CD8-positive, alpha-beta T cell (primary cell): ENCODE measurements at regions of chr12 and their contacts with region 1.

Region 1: GRCh38 chr12:120356567-120357030 is 12.4 kb downstream of the MSI1 start:
- DNase-seq: peak; percentile 39 to 83 (median 75)
- ATAC-seq: peak; percentile 96
- H3K4me3 ChIP-seq: no peak overlapping the region
- H3K4me3 Mint-ChIP-seq: no peak overlapping the region
- H3K27ac ChIP-seq: no peak overlapping the region
- H3K27ac Mint-ChIP-seq: no peak overlapping the region
- H3K4me1 ChIP-seq: no peaks in the 10 kb centered on the region
- H3K4me1 Mint-ChIP-seq: peaks cover 2% of the 10 kb centered on the region
- H3K27me3 ChIP-seq: peaks cover 0 to 2% of the 10 kb centered on the region in 2 experiments
- H3K27me3 Mint-ChIP-seq: peaks cover 32% of the 10 kb centered on the region
- CTCF ChIP-seq: peak; percentile 89

Region 2: DNA sequence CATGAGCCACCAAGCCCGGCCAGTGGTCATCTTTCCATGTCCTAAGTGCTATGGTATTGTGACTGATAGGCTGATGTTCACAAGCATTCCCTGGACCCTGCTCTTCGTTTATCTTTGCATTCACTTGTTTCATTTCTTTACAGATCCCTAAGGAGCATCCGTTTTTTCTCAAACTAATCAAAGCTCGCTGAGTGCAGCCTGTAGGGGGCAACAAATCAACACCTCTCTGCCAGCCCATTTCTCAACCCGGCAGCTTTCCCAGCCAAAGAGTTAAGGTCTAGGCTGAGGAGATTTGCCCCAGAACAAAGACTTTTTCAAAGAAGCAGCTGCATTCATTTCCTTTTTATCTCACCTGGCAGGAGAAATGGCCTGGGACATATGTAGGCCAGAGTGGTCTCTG is 42.4 kb before region 1 on chr12:
- CTCF ChIA-PET with region 1: no interaction called
- POLR2A ChIA-PET with region 1: no interaction called
- intact Hi-C with region 1: no loop called
- DNase-seq: no peak
- ATAC-seq: no peak
- H3K4me3 ChIP-seq: no peak overlapping the region
- H3K4me3 Mint-ChIP-seq: no peak overlapping the region
- H3K27ac ChIP-seq: no peak overlapping the region
- H3K27ac Mint-ChIP-seq: no peak overlapping the region
- H3K4me1 ChIP-seq: peaks cover 5% of the 10 kb centered on the region
- H3K4me1 Mint-ChIP-seq: peaks cover 13% of the 10 kb centered on the region
- H3K27me3 ChIP-seq: no peaks in the 10 kb centered on the region
- H3K27me3 Mint-ChIP-seq: no peaks in the 10 kb centered on the region
- CTCF ChIP-seq: no peak

Region 3: GRCh38 chr12:120373683-120374082 is 17.1 kb after region 1 on chr12:
- CTCF ChIA-PET with region 1: interaction called, 13 read pairs
- POLR2A ChIA-PET with region 1: no interaction called
- intact Hi-C with region 1: no loop called
- DNase-seq: no peak
- ATAC-seq: no peak
- H3K4me3 ChIP-seq: no peak overlapping the region
- H3K4me3 Mint-ChIP-seq: no peak overlapping the region
- H3K27ac ChIP-seq: no peak overlapping the region
- H3K27ac Mint-ChIP-seq: no peak overlapping the region
- H3K4me1 ChIP-seq: peaks cover 6% of the 10 kb centered on the region
- H3K4me1 Mint-ChIP-seq: peaks cover 9% of the 10 kb centered on the region
- H3K27me3 ChIP-seq: peaks cover 27 to 30% of the 10 kb centered on the region in 2 experiments
- H3K27me3 Mint-ChIP-seq: peaks cover 69% of the 10 kb centered on the region
- CTCF ChIP-seq: no peak

Region 4: DNA sequence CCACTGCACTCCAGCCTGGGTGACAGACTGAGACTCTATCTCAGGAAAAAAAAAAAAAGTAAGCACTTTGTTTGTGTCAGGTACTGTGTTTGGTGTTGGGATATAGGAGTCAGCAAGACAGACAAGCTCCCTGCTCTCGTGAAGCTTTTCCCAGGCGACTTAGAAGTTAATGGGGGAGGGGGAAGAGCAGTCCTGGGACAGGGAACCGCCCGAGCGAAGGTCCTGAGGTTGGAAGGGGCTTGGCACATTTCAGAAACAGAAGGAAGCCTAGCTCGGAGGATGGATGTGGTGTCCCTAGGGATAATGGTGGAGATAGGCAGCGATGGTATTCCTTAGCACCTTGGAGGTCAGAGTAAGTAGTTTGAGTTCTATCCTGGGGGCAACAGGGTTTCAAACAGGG is 72.8 kb after region 1 on chr12:
- CTCF ChIA-PET with region 1: interaction called, 11 read pairs
- POLR2A ChIA-PET with region 1: no interaction called
- intact Hi-C with region 1: loop called (anchors 1 kb)
- DNase-seq: no peak
- ATAC-seq: no peak
- H3K4me3 ChIP-seq: no peak overlapping the region
- H3K4me3 Mint-ChIP-seq: no peak overlapping the region
- H3K27ac ChIP-seq: no peak overlapping the region
- H3K27ac Mint-ChIP-seq: no peak overlapping the region
- H3K4me1 ChIP-seq: no peaks in the 10 kb centered on the region
- H3K4me1 Mint-ChIP-seq: peaks cover 1% of the 10 kb centered on the region
- H3K27me3 ChIP-seq: peaks cover 0 to 6% of the 10 kb centered on the region in 2 experiments
- H3K27me3 Mint-ChIP-seq: peaks cover 7% of the 10 kb centered on the region
- CTCF ChIP-seq: no peak

Region 5: DNA sequence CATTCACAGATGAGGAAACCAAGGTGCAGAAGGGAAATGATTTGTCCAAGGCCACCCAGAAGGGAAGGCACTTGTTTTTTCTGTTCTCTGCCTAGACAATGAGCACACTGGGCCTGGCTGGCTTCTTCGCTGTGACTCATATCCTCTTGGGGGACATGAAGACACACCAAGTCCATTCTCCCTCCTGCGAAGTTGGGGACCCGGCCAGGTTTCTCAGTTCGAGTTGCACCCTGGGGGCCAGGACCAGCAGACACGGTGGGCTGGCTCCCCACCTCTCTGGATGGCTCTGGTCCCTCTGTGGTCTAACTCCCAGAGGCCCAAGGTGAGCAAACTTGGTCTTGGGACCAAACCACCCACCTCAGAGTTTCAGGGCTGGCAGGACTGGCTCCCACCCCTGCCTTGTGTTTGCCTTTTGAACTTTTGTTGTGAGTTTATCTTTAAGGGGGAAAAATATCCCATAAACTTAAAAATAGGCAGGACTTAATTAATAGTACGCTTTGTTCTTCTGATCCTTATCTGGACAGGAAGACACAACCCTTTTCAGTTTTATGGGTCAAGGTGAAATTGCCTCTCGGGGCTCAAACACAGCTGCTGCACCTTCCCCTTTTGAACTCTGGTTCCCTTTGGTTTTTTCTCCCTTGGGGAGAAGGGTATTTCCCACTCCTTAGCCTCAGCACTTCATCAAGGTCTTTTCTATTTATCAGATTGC is 321.3 kb after region 1 on chr12:
- CTCF ChIA-PET with region 1: no interaction called
- POLR2A ChIA-PET with region 1: no interaction called
- intact Hi-C with region 1: no loop called
- DNase-seq: peak in 1 of 9 experiments; percentile 5
- ATAC-seq: no peak
- H3K4me3 ChIP-seq: no peak overlapping the region
- H3K4me3 Mint-ChIP-seq: no peak overlapping the region
- H3K27ac ChIP-seq: no peak overlapping the region
- H3K27ac Mint-ChIP-seq: no peak overlapping the region
- H3K4me1 ChIP-seq: no peaks in the 10 kb centered on the region
- H3K4me1 Mint-ChIP-seq: peaks cover 5% of the 10 kb centered on the region
- H3K27me3 ChIP-seq: no peaks in the 10 kb centered on the region
- H3K27me3 Mint-ChIP-seq: peaks cover 3% of the 10 kb centered on the region
- CTCF ChIP-seq: no peak

Region 6: GRCh38 chr12:120710031-120710804 is 353.6 kb after region 1 on chr12 and contains the start of gene UNC119B:
- CTCF ChIA-PET with region 1: no interaction called
- POLR2A ChIA-PET with region 1: no interaction called
- intact Hi-C with region 1: loop called in 1 of 2 experiments (anchors 5 kb)
- DNase-seq: peak; percentile 38 to 85 (median 77)
- ATAC-seq: peak; percentile 88
- H3K4me3 ChIP-seq: peak within 1 kb of the TSS; percentile 64 to 68
- H3K4me3 Mint-ChIP-seq: peak within 1 kb of the TSS; percentile 93
- H3K27ac ChIP-seq: peak within 1 kb of the TSS; percentile 40 to 70
- H3K27ac Mint-ChIP-seq: peak within 1 kb of the TSS; percentile 89
- H3K4me1 ChIP-seq: peaks cover 22% of the 10 kb centered on the region
- H3K4me1 Mint-ChIP-seq: peaks cover 37% of the 10 kb centered on the region
- H3K27me3 ChIP-seq: no peaks in the 10 kb centered on the region
- H3K27me3 Mint-ChIP-seq: no peaks in the 10 kb centered on the region
- CTCF ChIP-seq: no peak
- total RNA-seq, gene UNC119B: 8.1 to 8.4 TPM